Naive thymus-derived CD4-positive, alpha-beta T cell (primary cell): ENCODE measurements at regions of chr9 and their contacts with region 1.

Region 1: DNA sequence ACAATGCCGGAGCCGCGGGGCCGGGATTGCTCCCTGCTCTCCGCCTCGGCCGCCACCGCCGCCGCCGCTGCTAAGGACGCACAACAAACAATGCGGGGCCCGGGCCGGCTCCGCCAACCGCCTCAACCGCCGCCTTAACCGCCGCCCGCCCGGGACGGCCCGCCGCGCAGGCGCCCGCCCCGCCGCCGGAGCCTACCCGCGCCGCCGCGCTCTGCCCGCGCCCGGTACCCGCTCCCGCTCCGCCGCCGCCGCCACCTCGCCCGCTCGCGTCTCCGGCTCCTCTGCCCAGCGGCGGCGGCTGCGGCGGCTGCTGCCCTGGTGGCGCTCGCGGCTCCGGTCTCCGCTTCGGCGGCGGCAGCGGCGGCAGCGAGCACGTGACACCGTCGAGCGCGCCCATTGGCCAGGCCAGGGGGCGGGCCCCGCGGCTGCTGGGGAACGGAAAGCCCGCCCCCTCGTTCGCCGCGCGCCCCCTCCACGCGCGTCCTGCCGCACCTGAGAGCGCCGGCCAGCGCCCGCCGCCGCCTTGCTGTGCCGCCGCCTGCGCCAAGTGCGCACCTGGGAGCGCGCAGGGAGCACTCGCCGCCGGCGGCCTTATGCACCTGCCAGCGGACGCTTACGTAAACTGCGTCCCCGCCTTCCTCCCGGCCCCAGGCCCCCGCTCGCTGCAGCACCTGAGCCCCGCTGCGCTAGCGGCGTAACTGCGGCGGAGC is at the start of gene STRBP:
- DNase-seq: peak; percentile 90 to 98 (median 96)
- ATAC-seq: peak; percentile 96
- H3K4me3 ChIP-seq: peak within 1 kb of the TSS; percentile 76
- H3K4me3 Mint-ChIP-seq: peak within 1 kb of the TSS; percentile 72 to 97 (median 83)
- H3K27ac ChIP-seq: peak within 1 kb of the TSS; percentile 78
- H3K27ac Mint-ChIP-seq: peak within 1 kb of the TSS; percentile 37 to 90 (median 74)
- H3K4me1 ChIP-seq: peaks cover 3 to 12% of the 10 kb centered on the region in 2 donors
- H3K4me1 Mint-ChIP-seq: peaks cover 26 to 45% (median 40%) of the 10 kb centered on the region in 7 donors
- H3K27me3 ChIP-seq: no peaks in the 10 kb centered on the region
- H3K27me3 Mint-ChIP-seq: peaks cover 0 to 9% (median 0%) of the 10 kb centered on the region in 5 donors
- total RNA-seq, gene STRBP: 14.5 to 28.8 (median 17.5) TPM

Region 2: DNA sequence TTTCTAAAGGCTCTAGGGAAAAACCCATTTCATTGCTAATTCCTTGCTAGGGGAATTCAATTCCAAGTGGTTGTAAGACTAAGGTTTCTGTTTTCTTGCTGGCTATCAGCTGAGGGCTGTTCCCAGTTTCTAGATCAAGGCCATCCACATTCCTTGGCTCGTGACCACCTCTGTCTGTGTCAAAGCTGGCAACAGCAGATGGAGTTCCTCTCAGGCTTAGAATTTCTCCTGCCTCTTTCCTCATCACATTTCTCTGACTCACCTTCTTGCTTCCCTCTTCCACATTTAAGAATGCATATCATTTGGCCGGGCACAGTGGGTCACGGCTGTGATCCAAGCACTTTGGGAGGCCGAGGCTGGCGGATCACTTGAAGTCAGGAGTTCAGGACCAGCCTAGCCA is 1598.0 kb before region 1 on chr9:
- CTCF ChIA-PET with region 1: no interaction called
- POLR2A ChIA-PET with region 1: no interaction called
- intact Hi-C with region 1: no loop called
- DNase-seq: no peak
- ATAC-seq: no peak
- H3K4me3 ChIP-seq: no peak overlapping the region
- H3K4me3 Mint-ChIP-seq: no peak overlapping the region
- H3K27ac ChIP-seq: no peak overlapping the region
- H3K27ac Mint-ChIP-seq: no peak overlapping the region
- H3K4me1 ChIP-seq: no peaks in the 10 kb centered on the region
- H3K4me1 Mint-ChIP-seq: no peaks in the 10 kb centered on the region
- H3K27me3 ChIP-seq: no peaks in the 10 kb centered on the region
- H3K27me3 Mint-ChIP-seq: peaks cover 0 to 42% (median 16%) of the 10 kb centered on the region in 5 donors

Region 3: GRCh38 chr9:122827761-122828093 is 440.7 kb before region 1 on chr9:
- CTCF ChIA-PET with region 1: no interaction called
- POLR2A ChIA-PET with region 1: interaction called, 3 read pairs
- intact Hi-C with region 1: loop called (anchors 1 to 5 kb)
- DNase-seq: peak in 1 of 9 donors; percentile 11
- ATAC-seq: no peak
- H3K4me3 ChIP-seq: peak overlapping the region; percentile 97
- H3K4me3 Mint-ChIP-seq: peak overlapping the region; percentile 97 to 100 (median 99)
- H3K27ac ChIP-seq: peak overlapping the region; percentile 99
- H3K27ac Mint-ChIP-seq: peak overlapping the region; percentile 92 to 98 (median 98)
- H3K4me1 ChIP-seq: peaks cover 9 to 11% of the 10 kb centered on the region in 2 donors
- H3K4me1 Mint-ChIP-seq: peaks cover 23 to 51% (median 42%) of the 10 kb centered on the region in 7 donors
- H3K27me3 ChIP-seq: no peaks in the 10 kb centered on the region
- H3K27me3 Mint-ChIP-seq: no peaks in the 10 kb centered on the region

Region 4: GRCh38 chr9:122961139-122961538 is 307.3 kb before region 1 on chr9:
- CTCF ChIA-PET with region 1: no interaction called
- POLR2A ChIA-PET with region 1: no interaction called
- intact Hi-C with region 1: no loop called
- DNase-seq: no peak
- ATAC-seq: no peak
- H3K4me3 ChIP-seq: no peak overlapping the region
- H3K4me3 Mint-ChIP-seq: no peak overlapping the region
- H3K27ac ChIP-seq: no peak overlapping the region
- H3K27ac Mint-ChIP-seq: no peak overlapping the region
- H3K4me1 ChIP-seq: no peaks in the 10 kb centered on the region
- H3K4me1 Mint-ChIP-seq: peaks cover 0 to 4% (median 0%) of the 10 kb centered on the region in 7 donors
- H3K27me3 ChIP-seq: no peaks in the 10 kb centered on the region
- H3K27me3 Mint-ChIP-seq: no peaks in the 10 kb centered on the region

Region 5: DNA sequence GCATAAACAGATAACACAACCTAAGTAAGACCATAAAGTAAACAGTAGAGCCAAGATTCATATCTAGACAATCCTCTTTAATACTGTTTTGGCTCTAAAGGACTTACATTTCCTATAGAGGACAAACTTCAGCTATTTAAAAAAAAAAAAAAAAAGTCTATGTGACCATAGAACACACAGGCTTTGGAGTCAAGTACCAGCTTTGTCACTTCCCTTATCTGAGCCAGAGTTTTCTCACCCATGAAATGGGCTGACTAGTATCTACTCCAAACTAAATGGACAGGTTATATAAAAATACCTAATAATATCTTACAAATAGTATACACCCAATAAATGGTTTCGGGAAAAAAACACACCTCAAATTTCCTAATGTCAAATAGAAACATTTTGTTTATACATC is 81.3 kb before region 1 on chr9:
- CTCF ChIA-PET with region 1: no interaction called
- POLR2A ChIA-PET with region 1: no interaction called
- intact Hi-C with region 1: loop called in 1 of 2 experiments (anchors 10 kb)
- DNase-seq: no peak
- ATAC-seq: no peak
- H3K4me3 ChIP-seq: no peak overlapping the region
- H3K4me3 Mint-ChIP-seq: no peak overlapping the region
- H3K27ac ChIP-seq: no peak overlapping the region
- H3K27ac Mint-ChIP-seq: peak overlapping the region in 3 of 9 donors; percentile 17 to 62 (median 19)
- H3K4me1 ChIP-seq: no peaks in the 10 kb centered on the region
- H3K4me1 Mint-ChIP-seq: peaks cover 0 to 5% (median 0%) of the 10 kb centered on the region in 7 donors
- H3K27me3 ChIP-seq: no peaks in the 10 kb centered on the region
- H3K27me3 Mint-ChIP-seq: no peaks in the 10 kb centered on the region

Region 6: GRCh38 chr9:123322273-123323195 is 54.1 kb after region 1 on chr9:
- CTCF ChIA-PET with region 1: no interaction called
- POLR2A ChIA-PET with region 1: interaction called, 8 read pairs
- intact Hi-C with region 1: loop called (anchors 1 to 2 kb)
- DNase-seq: peak; percentile 33 to 90 (median 83)
- ATAC-seq: peak; percentile 88
- H3K4me3 ChIP-seq: peak overlapping the region; percentile 37
- H3K4me3 Mint-ChIP-seq: peak overlapping the region; percentile 59 to 85 (median 74)
- H3K27ac ChIP-seq: peak overlapping the region; percentile 70
- H3K27ac Mint-ChIP-seq: peak overlapping the region; percentile 83 to 99 (median 94)
- H3K4me1 ChIP-seq: peaks cover 20 to 33% of the 10 kb centered on the region in 2 donors
- H3K4me1 Mint-ChIP-seq: peaks cover 24 to 56% (median 41%) of the 10 kb centered on the region in 7 donors
- H3K27me3 ChIP-seq: no peaks in the 10 kb centered on the region
- H3K27me3 Mint-ChIP-seq: no peaks in the 10 kb centered on the region

Region 7: DNA sequence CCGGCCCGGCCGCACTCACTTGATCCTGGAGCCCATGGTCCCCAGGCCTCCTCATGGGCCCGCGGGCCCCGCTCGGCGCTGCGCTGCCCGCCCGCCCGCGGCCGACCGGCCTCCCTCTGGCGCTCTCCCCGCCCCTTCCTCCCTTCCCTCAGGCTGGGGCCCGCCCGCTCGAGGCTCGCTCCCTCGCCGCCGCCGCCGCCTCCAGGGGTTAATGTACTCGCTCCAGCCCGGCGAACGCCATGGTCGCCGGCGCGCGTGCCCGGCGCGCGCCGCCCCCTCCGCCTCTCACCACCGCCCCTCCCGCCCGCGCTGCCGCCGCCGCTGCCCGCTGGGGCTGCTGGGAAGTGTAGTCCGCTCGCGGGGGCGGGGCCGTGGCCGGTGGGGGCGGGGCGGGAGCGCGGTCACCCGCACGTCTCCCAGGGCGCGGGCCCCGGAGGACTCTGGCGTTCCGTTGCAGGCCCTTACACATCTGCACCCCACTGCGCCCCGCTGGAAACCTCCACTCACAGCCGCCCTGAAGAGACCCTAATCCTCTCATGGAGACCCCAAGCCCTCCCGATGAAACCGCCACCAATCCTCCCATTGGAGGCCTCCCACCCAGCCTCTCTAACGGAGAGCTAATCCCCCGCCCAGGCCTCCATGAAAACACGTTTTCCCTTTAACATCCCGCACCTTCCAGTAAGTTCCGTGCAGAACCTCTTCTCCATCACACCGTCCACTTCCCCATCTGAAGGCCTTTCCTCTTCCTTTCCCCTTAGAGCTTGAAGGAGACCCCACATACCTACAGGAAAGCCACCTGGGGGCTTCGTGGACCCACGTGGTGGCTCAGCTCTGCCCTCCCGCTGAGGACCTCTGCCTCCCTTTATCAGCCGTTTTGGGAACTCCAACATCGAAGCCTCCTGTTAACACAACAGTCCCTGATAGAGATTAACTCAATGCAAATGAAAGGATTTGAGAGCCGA is 661.8 kb after region 1 on chr9 and contains the start of gene DENND1A:
- CTCF ChIA-PET with region 1: no interaction called
- POLR2A ChIA-PET with region 1: no interaction called
- intact Hi-C with region 1: loop called in 1 of 2 experiments (anchors 2 kb)
- DNase-seq: peak; percentile 69 to 89 (median 79)
- ATAC-seq: peak; percentile 96
- H3K4me3 ChIP-seq: peak within 1 kb of the TSS; percentile 58
- H3K4me3 Mint-ChIP-seq: peak within 1 kb of the TSS; percentile 84 to 96 (median 88)
- H3K27ac ChIP-seq: peak within 1 kb of the TSS; percentile 73
- H3K27ac Mint-ChIP-seq: peak within 1 kb of the TSS; percentile 76 to 95 (median 88)
- H3K4me1 ChIP-seq: peaks cover 7 to 20% of the 10 kb centered on the region in 2 donors
- H3K4me1 Mint-ChIP-seq: peaks cover 32 to 48% (median 45%) of the 10 kb centered on the region in 7 donors
- H3K27me3 ChIP-seq: no peaks in the 10 kb centered on the region
- H3K27me3 Mint-ChIP-seq: peaks cover 0 to 14% (median 0%) of the 10 kb centered on the region in 5 donors
- total RNA-seq, gene DENND1A: 14.5 to 41.1 (median 17.1) TPM